Activated CD8-positive, alpha-beta memory T cell treated with anti-CD3 and anti-CD28 coated beads, Interleukin-2, amount 10 ng/mL, durations not matched to agents 7 days and 5 days (primary cell): ENCODE measurements at regions of chr5 and their contacts with region 1.

Region 1: DNA sequence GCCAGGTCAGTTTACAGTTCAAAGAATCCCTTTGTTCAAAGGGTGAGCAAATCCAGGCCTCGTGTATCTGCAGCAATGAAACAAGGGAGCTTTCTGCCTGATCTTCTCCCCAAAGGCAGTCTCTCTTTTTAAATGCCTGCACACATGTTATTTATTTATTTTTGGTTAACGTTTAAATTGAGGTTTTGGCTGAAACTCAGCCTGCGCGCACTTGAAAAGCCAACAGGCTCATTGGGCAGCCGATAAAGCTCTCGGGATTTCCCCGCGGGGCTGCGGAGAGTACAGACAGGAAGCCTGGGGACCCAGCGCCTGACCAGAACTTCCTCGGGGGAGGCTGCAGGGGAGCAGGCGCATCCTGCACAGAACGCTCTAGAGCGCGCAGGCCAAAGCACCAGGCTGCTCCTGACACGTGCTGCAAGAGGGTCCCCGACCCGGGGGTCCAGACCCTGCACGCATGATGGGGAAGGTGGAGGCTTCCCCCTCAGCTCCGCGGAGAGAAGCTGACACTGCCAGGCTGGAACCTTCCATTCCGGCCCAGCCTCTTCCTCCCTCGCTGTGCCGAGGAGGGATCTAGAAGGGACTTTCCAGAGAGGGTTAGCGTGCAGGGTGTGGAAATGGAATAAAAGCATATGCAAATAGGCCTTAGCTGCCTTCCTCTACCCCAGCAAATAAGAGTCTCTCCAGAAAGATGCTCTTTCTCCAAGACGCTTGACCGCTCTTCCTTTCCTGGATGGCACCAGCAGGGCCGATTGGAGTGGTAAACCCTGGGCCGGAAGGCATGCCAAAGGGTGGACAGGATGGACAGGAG is 46.1 kb downstream of the PTTG1 start:
- DNase-seq: peak; percentile 95
- ATAC-seq: peak; percentile 86
- H3K4me3 Mint-ChIP-seq: peak overlapping the region; percentile 97
- H3K27ac Mint-ChIP-seq: peak overlapping the region; percentile 99
- H3K4me1 Mint-ChIP-seq: peaks cover 73% of the 10 kb centered on the region
- H3K27me3 Mint-ChIP-seq: no peaks in the 10 kb centered on the region

Region 2: GRCh38 chr5:160269017-160269416 is 198.7 kb before region 1 on chr5:
- CTCF ChIA-PET with region 1: no interaction called
- DNase-seq: no peak
- ATAC-seq: no peak
- H3K4me3 Mint-ChIP-seq: no peak overlapping the region
- H3K27ac Mint-ChIP-seq: no peak overlapping the region
- H3K4me1 Mint-ChIP-seq: peaks cover 3% of the 10 kb centered on the region
- H3K27me3 Mint-ChIP-seq: peaks cover 17% of the 10 kb centered on the region

Region 3: DNA sequence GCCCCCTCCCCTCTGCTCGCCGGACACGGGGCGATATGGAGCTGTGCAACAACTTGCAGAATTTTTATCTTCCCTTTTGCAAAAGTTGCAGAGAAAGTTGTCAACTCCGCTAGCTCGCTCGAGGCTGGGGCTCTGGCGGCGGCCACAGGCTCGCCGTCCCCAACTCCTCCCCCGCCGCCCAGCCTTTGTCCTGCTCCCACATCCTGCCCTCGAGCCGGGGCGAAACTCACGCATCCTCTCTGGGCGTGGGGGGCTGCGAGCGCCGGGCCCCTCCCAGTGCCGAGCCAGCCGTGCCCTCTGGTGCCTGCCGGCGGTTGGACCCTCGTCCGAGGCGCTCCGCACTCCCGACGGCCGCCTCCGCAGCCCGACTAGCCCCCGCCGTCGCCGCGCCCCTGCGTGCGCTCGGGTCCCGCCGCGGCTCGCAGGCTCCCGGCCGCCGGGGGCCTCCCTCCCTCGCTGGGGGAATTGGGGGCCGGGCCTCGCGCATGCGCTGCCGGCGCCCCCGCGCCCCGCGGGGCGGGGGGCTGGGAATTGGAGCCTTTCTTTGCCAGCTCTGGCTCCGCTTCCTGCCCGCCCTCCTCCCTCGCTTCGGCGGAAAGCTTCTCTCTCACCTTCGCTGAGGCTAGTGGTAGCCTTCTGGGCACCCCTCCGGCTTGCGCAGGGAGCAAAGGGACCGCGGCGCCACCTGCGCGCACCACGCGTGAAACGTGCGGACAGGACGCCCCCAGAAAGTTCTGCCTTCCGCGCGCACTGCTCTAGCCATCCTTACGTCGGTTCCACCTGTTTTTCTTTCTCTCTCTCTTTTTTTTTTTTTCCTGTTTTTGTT is 155.4 kb before region 1 on chr5 and contains the start of gene CCNJL:
- CTCF ChIA-PET with region 1: no interaction called
- DNase-seq: no peak
- ATAC-seq: peak; percentile 45
- H3K4me3 Mint-ChIP-seq: peak within 1 kb of the TSS; percentile 60
- H3K27ac Mint-ChIP-seq: no peak within 1 kb of the TSS
- H3K4me1 Mint-ChIP-seq: peaks cover 16% of the 10 kb centered on the region
- H3K27me3 Mint-ChIP-seq: peaks cover 85% of the 10 kb centered on the region
- total RNA-seq, gene CCNJL: 0.23 TPM in 1 of 2 experiments, not detected in the other

Region 4: GRCh38 chr5:160418561-160419457 is 49.0 kb before region 1 on chr5 and contains the start of gene SLU7:
- CTCF ChIA-PET with region 1: interaction called, 19 read pairs
- DNase-seq: peak; percentile 96
- ATAC-seq: peak; percentile 79
- H3K4me3 Mint-ChIP-seq: peak within 1 kb of the TSS; percentile 87
- H3K27ac Mint-ChIP-seq: peak within 1 kb of the TSS; percentile 96
- H3K4me1 Mint-ChIP-seq: peaks cover 58% of the 10 kb centered on the region
- H3K27me3 Mint-ChIP-seq: no peaks in the 10 kb centered on the region
- total RNA-seq, gene SLU7: 50.1 to 54.6 TPM

Region 5: DNA sequence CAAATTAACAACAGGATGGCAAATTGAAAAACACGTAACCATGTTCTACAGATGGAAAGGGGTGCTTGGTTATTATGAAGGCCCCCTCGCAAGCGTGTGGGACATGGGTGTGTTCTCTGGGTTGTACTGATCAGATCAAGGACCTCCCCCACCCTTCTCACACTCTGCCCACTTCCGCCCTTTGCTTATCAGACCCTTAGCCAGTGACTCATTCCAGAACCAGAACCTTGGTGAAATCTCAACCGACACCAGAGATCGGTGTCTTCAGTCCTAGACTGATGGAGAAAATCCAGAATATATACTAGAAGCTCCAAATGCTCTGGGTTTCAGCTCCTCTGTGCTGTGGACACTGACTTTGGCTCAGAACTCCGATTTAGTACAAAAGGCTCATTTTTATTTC is 18.8 kb after region 1 on chr5:
- CTCF ChIA-PET with region 1: interaction called, 12 read pairs
- DNase-seq: peak; percentile 92
- ATAC-seq: peak; percentile 98
- H3K4me3 Mint-ChIP-seq: peak overlapping the region; percentile 33
- H3K27ac Mint-ChIP-seq: peak overlapping the region; percentile 85
- H3K4me1 Mint-ChIP-seq: peaks cover 70% of the 10 kb centered on the region
- H3K27me3 Mint-ChIP-seq: no peaks in the 10 kb centered on the region

Region 6: GRCh38 chr5:160508780-160509361 is 41.1 kb after region 1 on chr5:
- CTCF ChIA-PET with region 1: interaction called, 29 read pairs
- DNase-seq: peak; percentile 82
- ATAC-seq: peak; percentile 78
- H3K4me3 Mint-ChIP-seq: no peak overlapping the region
- H3K27ac Mint-ChIP-seq: peak overlapping the region; percentile 67
- H3K4me1 Mint-ChIP-seq: peaks cover 38% of the 10 kb centered on the region
- H3K27me3 Mint-ChIP-seq: peaks cover 7% of the 10 kb centered on the region